ENCODE measurements at regions of chr3 and their contacts with region 1.

Region 1: DNA sequence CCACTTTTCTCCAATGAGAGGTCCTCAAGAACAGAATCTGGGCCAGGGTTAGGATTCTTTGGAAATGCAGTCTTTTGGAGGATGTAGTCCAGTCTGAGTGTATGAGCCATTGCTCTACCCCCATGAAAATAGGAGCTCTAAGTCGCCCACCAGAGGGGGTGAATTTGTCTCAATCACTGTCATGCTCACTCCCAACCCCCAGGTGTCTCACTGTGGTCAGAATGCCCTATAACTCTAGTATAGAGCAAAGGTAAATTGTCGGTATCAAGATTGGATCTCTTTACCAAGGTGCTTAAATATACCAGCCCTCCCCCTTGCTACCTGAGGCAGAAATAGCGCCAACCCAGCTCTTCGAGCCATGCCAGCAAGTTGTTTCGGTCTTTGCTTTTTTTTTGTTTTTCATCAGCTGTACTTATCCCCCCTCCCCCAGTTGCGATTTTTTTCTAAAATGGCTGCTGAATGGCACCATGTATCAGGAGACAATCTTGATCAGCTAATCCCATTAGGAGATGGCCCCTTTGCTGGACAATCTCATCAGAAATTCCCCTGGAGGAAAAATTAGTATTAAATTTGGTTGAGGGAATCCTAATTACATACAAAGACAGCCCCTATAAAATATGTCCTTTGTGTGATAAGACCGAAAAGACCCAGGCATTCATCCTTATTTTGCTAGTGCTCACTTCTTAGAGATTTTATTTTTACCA is 130.7 kb downstream of the EBLN2 start:
- DNase-seq: peak; percentile 14
- H3K4me3 Mint-ChIP-seq: no peak overlapping the region
- H3K27ac Mint-ChIP-seq: no peak overlapping the region
- H3K4me1 Mint-ChIP-seq: no peaks in the 10 kb centered on the region
- H3K27me3 Mint-ChIP-seq: no peaks in the 10 kb centered on the region
- CTCF ChIP-seq: no peak

Region 2: GRCh38 chr3:73136941-73137340 is 55.2 kb before region 1 on chr3:
- CTCF ChIA-PET with region 1: no interaction called
- intact Hi-C with region 1: no loop called
- DNase-seq: no peak
- H3K4me3 Mint-ChIP-seq: no peak overlapping the region
- H3K27ac Mint-ChIP-seq: no peak overlapping the region
- H3K4me1 Mint-ChIP-seq: no peaks in the 10 kb centered on the region
- H3K27me3 Mint-ChIP-seq: peaks cover 10% of the 10 kb centered on the region
- CTCF ChIP-seq: no peak

Region 3: DNA sequence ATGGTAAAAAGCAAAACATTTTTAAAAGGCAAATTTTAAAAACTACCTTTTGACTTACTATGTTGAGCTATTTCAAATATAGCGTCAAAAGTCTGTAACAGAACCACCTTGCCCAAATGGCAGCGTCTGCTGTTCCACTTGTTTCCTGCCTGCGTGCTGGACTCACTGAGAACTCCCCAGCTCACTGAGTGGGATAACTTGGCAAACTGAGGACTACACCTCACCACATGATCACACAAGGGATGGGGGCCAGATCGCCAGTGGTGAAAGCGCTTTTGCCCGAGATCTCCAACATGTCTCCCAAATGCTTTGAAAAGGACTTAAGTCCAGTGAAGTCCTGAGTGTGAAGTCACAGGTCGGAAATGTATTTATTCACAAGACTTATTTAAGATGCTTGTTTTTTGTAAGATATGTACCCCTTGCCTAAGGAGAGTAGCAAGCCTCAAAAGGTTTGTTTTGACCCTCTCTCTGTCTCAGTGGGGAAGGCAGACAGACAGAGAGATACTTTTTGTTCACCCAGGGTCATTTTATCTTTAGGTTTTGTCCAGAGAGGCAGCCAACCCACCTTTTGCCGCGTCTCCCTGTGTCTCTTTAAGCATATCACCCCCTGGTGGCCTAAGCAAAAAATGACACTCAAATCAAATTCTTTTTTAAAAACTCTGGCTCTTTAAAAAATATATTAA is 240.0 kb after region 1 on chr3:
- CTCF ChIA-PET with region 1: no interaction called
- intact Hi-C with region 1: loop called (anchors 2 kb)
- DNase-seq: peak; percentile 9
- H3K4me3 Mint-ChIP-seq: no peak overlapping the region
- H3K27ac Mint-ChIP-seq: no peak overlapping the region
- H3K4me1 Mint-ChIP-seq: no peaks in the 10 kb centered on the region
- H3K27me3 Mint-ChIP-seq: peaks cover 63% of the 10 kb centered on the region
- CTCF ChIP-seq: peak; percentile 39

Measured in Calu3 (cell line).